ENCODE measurements at regions of chr3 and their contacts with region 1.

Region 1: GRCh38 chr3:185733980-185734724 is 90.7 kb downstream of the IGF2BP2 start:
- DNase-seq: peak; percentile 64 to 87 (median 74)
- ATAC-seq: peak; percentile 93
- H3K4me3 ChIP-seq: no peak overlapping the region
- H3K27ac ChIP-seq: peak overlapping the region; percentile 39; the same call in 1 of the 3 replicates
- H3K4me1 ChIP-seq: peaks cover 8 to 33% of the 10 kb centered on the region in 2 experiments; a peak in 4 of 5 replicates
- H3K27me3 ChIP-seq: no peaks in the 10 kb centered on the region
- CTCF ChIP-seq: peak; percentile 63 to 87 (median 79)
- EP300 ChIP-seq: no peak
- POLR2A ChIP-seq: no peak
- RAD21 ChIP-seq: peak; percentile 83 to 92

Region 2: DNA sequence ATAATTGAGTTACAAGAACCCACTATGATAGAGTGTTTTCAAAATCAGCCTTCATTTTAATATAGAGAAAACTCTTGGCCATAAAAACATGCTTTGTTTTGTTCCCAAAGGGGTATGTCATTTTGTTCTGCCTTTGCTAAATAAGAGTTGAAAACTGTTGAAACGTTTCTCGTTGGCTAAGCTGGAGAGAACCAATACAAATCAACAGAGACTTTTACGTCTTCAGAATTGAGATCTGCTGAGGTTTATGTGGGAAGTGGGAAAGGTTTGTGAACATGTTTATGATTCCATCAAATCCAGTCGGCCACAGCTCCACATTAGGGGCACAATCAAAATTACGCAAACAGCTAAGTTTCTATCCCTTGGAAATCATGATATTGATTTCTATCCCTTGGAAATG is 11.3 kb before region 1 on chr3:
- CTCF ChIA-PET with region 1: no interaction called
- POLR2A ChIA-PET with region 1: interaction called, 13 read pairs
- in situ Hi-C with region 1: no loop called
- intact Hi-C with region 1: no loop called
- DNase-seq: no peak
- ATAC-seq: no peak
- H3K4me3 ChIP-seq: no peak overlapping the region
- H3K27ac ChIP-seq: no peak overlapping the region
- H3K4me1 ChIP-seq: peaks cover 0 to 2% of the 10 kb centered on the region in 2 experiments; a peak in 1 of 5 replicates
- H3K27me3 ChIP-seq: no peaks in the 10 kb centered on the region
- CTCF ChIP-seq: no peak
- EP300 ChIP-seq: no peak
- POLR2A ChIP-seq: no peak
- RAD21 ChIP-seq: no peak

Region 3: GRCh38 chr3:185764163-185764979 is 30.2 kb after region 1 on chr3:
- CTCF ChIA-PET with region 1: no interaction called
- POLR2A ChIA-PET with region 1: interaction called, 5 read pairs
- in situ Hi-C with region 1: no loop called
- intact Hi-C with region 1: loop called (anchors 1 kb)
- DNase-seq: no peak
- ATAC-seq: peak; percentile 23
- H3K4me3 ChIP-seq: no peak overlapping the region
- H3K27ac ChIP-seq: no peak overlapping the region
- H3K4me1 ChIP-seq: peaks cover 4 to 34% of the 10 kb centered on the region in 2 experiments; a peak in 4 of 5 replicates
- H3K27me3 ChIP-seq: no peaks in the 10 kb centered on the region; a peak in 1 of 5 replicates
- CTCF ChIP-seq: no peak
- EP300 ChIP-seq: no peak
- POLR2A ChIP-seq: no peak
- RAD21 ChIP-seq: no peak

Region 4: DNA sequence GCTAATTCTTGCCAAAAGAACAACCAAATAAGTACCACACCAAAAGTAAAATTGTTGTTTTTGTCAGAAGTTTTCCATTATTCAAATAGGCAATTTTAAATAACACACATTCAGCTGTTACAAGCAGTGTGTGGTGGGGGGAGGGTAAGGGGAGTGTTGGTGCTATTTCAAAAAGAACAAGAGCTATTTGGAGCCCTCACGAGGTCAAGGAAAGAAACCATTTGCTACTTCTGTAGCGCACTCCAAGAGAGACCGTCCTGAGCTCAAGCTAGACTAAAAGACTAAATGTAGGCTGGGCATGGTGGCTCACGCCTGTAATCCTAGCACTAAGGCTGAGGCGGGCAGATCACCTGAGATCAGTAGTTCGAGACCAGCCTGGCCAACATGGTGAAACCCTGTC is 111.9 kb after region 1 on chr3:
- CTCF ChIA-PET with region 1: interaction called, 3 read pairs
- POLR2A ChIA-PET with region 1: interaction called, 3 read pairs
- in situ Hi-C with region 1: no loop called
- intact Hi-C with region 1: loop called (anchors 2 kb)
- DNase-seq: peak; percentile 17 to 58 (median 30)
- ATAC-seq: peak; percentile 88
- H3K4me3 ChIP-seq: no peak overlapping the region
- H3K27ac ChIP-seq: no peak overlapping the region
- H3K4me1 ChIP-seq: no peaks in the 10 kb centered on the region; a peak in 1 of 5 replicates
- H3K27me3 ChIP-seq: no peaks in the 10 kb centered on the region
- CTCF ChIP-seq: peak in 2 of 3 experiments; percentile 31 to 44; a peak in 3 of 6 replicates
- EP300 ChIP-seq: no peak
- POLR2A ChIP-seq: no peak
- RAD21 ChIP-seq: peak in 1 of 2 experiments; percentile 53; a peak in 2 of 4 replicates

Region 5: GRCh38 chr3:185937689-185938463 is 203.7 kb after region 1 on chr3 and contains the start of gene TRA2B:
- CTCF ChIA-PET with region 1: no interaction called
- POLR2A ChIA-PET with region 1: interaction called, 10 read pairs
- in situ Hi-C with region 1: no loop called
- intact Hi-C with region 1: loop called (anchors 5 kb)
- DNase-seq: peak; percentile 95 to 99 (median 96)
- ATAC-seq: peak; percentile 87
- H3K4me3 ChIP-seq: peak within 1 kb of the TSS; percentile 99
- H3K27ac ChIP-seq: peak within 1 kb of the TSS; percentile 100
- H3K4me1 ChIP-seq: peaks cover 0 to 10% of the 10 kb centered on the region in 2 experiments; a peak in 2 of 5 replicates
- H3K27me3 ChIP-seq: no peaks in the 10 kb centered on the region
- CTCF ChIP-seq: peak; percentile 30 to 44 (median 43); a peak in 3 of 6 replicates
- EP300 ChIP-seq: peak; percentile 35
- POLR2A ChIP-seq: peak; percentile 100
- RAD21 ChIP-seq: no peak
- polyA plus RNA-seq, gene TRA2B: 105 to 132 TPM

Measured in K562 (cell line).